Sciatic nerve (tissue), 2 donors: ENCODE measurements at regions of chr12 and their contacts with region 1.

Region 1: DNA sequence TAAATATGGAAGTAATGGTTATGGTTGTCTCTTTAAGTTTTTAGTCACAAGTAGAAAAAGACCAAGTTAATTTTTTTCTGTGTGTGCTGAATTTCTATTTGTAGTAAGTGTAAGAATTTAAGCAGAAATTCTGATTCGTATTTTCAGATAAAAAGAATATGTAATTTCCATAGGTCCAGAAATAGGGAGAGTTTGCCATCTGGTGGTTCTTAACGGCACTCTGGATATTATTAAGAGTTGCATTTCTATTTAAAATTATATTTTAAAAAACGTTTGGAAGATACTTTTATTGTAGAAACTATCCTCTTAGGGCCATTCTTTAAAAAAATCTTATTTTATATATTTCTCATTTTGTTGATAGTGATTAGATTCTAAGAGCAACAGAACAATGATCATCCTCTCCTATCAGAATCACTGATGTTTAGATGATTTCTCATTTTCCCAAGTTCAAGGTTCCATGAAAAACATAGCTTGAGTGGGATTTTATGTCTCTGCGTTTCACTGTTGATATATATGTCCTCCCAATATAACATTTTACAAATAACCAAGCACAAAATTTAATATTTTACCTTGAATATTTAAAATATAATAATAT is 88.3 kb downstream of the LRRK2 start:
- DNase-seq: no peak
- ATAC-seq: no peak

Region 2: DNA sequence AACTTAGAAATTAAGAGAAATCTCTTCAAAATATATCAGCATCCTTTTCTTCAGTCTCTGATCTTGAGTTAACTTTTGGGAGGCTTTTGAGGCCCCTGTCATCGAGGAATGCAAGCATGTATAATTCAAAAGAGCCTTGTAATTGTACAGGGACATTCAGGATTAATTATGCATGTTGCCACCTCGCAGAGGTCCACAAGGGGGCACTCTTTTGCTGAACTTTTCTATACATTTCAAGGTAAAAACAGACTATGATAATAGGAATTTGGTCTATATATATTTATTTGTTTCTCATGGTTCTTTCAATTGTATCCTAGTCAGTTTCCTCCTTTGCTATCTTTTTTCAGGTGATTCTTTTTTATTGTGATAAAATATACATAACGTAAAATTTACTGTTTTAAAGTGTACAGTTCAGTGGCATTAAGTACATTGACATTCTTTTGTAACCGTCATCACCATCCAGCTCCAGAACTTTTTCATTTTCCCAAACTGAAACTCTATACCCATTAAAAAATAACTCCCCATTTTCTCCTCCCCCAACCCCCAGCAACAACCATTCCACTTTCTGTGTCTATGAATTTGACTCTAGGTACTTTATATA is 160.2 kb before region 1 on chr12:
- intact Hi-C with region 1: loop called (anchors 10 kb)
- DNase-seq: peak; percentile 70
- ATAC-seq: peak; percentile 44

Region 3: GRCh38 chr12:40351976-40352375 is 38.9 kb after region 1 on chr12:
- intact Hi-C with region 1: loop called (anchors 2 kb)
- DNase-seq: no peak
- ATAC-seq: no peak